ENCODE measurements at regions of chr1 and their contacts with region 1.

Region 1: DNA sequence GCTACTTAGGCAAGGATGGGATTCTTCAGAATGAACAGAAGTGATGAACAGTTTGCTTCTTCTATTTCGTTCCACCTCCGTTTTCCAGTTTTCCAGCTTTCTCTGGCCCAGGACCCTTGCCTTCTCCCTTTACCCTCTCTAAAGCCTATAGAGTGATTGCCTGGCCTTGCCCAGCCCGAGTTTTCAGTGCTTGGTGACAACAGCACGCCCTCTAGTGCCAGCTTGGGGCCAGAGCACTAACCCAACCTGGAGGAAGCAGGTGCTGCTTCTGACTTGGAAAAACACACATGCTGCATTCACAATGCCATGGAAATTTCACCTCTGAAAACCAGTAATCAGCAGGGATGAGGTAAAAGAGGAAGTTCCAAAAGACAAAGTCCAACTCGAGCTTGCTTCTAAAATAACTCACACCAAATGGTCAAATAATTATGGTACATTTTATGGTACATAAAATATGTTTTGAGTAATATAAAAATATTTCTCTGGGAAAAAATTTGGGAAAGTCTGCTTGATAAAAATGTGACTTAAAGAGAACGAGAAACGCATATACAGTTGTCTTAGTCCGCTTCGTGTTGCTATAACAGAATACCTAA is 26.1 kb downstream of the UBE2T start:
- DNase-seq: peak; percentile 51 to 81 (median 65)
- H3K4me3 ChIP-seq: no peak overlapping the region
- H3K27ac ChIP-seq: no peak overlapping the region
- H3K4me1 ChIP-seq: no peaks in the 10 kb centered on the region
- H3K27me3 ChIP-seq: no peaks in the 10 kb centered on the region
- CTCF ChIP-seq: peak; percentile 28 to 63 (median 58)
- EP300 ChIP-seq: no peak
- POLR2A ChIP-seq: no peak

Region 2: DNA sequence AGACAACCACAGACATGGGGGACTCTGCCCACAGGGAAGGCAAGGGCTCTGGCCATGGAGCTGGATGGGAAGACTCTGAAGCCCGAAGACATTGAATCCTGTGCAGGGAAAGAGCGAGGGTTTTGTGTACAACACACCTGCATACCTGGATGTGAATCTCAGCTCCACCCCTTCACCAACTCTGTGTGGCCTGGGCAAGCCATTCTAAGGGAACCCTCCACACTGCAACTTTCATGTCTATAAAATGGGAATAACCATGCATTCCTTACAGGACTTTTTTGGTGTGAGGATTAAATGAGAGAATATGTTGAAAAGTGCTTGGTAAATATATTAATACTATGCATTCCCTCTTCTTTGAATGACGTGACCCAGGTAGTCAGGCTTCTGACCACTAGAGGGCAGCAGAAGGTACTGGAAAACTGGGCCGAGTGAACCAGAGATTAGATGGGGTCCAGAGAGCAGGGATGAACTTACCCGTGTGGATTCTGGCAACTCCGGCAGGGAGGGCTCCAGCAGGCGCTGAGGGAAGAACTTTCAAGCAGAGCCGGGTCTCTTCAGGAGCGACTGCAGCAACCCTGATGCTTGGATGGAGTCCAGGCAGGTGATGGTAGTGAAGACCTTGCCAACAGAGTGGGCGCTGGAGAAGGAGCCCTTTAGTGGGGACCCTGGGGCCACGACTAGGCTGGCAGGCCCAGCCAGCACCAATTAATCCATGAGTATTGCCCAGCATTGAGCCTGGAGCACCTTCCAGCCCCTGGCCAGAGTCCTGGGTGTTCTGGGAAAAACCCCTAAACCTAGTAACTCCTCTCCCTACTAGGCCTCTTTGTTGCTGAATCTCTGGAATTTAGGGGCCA is 306.1 kb before region 1 on chr1:
- intact Hi-C with region 1: loop called in 1 of 4 experiments (anchors 10 kb)
- DNase-seq: peak; percentile 77 to 86 (median 79)
- H3K4me3 ChIP-seq: no peak overlapping the region
- H3K27ac ChIP-seq: peak overlapping the region in 1 of 2 donors; percentile 65
- H3K4me1 ChIP-seq: no peaks in the 10 kb centered on the region
- H3K27me3 ChIP-seq: no peaks in the 10 kb centered on the region
- CTCF ChIP-seq: peak; percentile 81 to 86 (median 84)
- EP300 ChIP-seq: no peak
- POLR2A ChIP-seq: no peak

Region 3: GRCh38 chr1:202154766-202155477 is 160.8 kb before region 1 on chr1:
- intact Hi-C with region 1: no loop called
- DNase-seq: peak in 3 of 5 donors; percentile 56 to 62 (median 56)
- H3K4me3 ChIP-seq: no peak overlapping the region
- H3K27ac ChIP-seq: no peak overlapping the region
- H3K4me1 ChIP-seq: peaks cover 10% of the 10 kb centered on the region
- H3K27me3 ChIP-seq: no peaks in the 10 kb centered on the region
- CTCF ChIP-seq: peak in 1 of 3 donors; percentile 34
- EP300 ChIP-seq: no peak
- POLR2A ChIP-seq: no peak

Region 4: GRCh38 chr1:202193614-202194327 is 121.9 kb before region 1 on chr1 and contains the start of gene LGR6:
- intact Hi-C with region 1: loop called in 3 of 4 experiments (anchors 2 to 10 kb)
- DNase-seq: no peak
- H3K4me3 ChIP-seq: no peak within 1 kb of the TSS
- H3K27ac ChIP-seq: no peak within 1 kb of the TSS
- H3K4me1 ChIP-seq: peaks cover 3% of the 10 kb centered on the region
- H3K27me3 ChIP-seq: no peaks in the 10 kb centered on the region
- CTCF ChIP-seq: no peak
- EP300 ChIP-seq: no peak
- POLR2A ChIP-seq: no peak
- total RNA-seq, gene LGR6: 0.24 to 12.4 (median 1.4) TPM

Region 5: DNA sequence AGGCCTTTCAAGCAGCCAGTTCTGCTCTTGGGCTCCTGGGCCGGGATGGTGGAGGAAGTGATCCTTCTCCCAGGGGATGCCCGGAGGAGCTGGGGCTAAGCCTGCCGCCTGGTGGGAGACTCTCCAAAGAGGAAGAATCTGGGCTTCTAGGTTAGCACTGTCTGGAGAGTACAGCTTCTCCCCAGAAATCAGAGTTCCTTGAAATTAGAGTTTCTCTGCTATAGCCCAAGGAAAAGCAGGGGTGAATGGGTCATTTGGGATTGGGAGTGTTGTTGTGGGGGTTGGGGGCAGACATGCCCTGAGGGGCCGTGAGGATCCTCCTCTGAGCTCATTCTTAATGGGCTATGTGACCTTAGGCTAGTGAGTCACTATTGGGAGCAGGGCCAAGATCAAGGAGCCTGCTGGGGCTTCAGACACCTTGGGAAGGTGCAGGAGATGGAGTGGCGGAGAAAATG is 115.5 kb before region 1 on chr1:
- intact Hi-C with region 1: loop called in 2 of 4 experiments (anchors 2 to 5 kb)
- DNase-seq: no peak
- H3K4me3 ChIP-seq: no peak overlapping the region
- H3K27ac ChIP-seq: no peak overlapping the region
- H3K4me1 ChIP-seq: no peaks in the 10 kb centered on the region
- H3K27me3 ChIP-seq: no peaks in the 10 kb centered on the region
- CTCF ChIP-seq: no peak
- EP300 ChIP-seq: no peak
- POLR2A ChIP-seq: no peak

Region 6: GRCh38 chr1:202247894-202248681 is 67.6 kb before region 1 on chr1:
- intact Hi-C with region 1: no loop called
- DNase-seq: peak in 1 of 5 donors; percentile 3
- H3K4me3 ChIP-seq: no peak overlapping the region
- H3K27ac ChIP-seq: no peak overlapping the region
- H3K4me1 ChIP-seq: no peaks in the 10 kb centered on the region
- H3K27me3 ChIP-seq: no peaks in the 10 kb centered on the region
- CTCF ChIP-seq: no peak
- EP300 ChIP-seq: no peak
- POLR2A ChIP-seq: no peak

Region 7: DNA sequence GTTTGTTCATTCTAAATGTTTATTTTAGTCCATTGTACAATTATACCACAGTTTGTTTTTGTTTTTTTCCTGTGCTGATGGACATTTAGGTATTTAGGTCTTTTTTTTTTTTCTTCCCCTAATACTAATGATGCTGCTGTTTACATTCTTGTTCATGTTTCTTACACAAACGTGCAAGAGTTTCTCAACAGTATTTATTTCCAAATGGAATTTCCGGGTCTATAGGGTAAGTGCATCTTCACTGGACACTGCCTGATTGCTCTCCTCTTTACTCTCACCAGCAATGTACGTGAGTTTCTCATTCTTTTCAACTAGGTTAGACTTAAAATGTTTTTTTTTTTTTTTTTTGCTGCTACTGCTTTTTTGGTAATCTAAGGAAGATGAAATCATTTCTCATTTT is 155.6 kb after region 1 on chr1:
- intact Hi-C with region 1: no loop called
- DNase-seq: no peak
- H3K4me3 ChIP-seq: no peak overlapping the region
- H3K27ac ChIP-seq: no peak overlapping the region
- H3K4me1 ChIP-seq: no peaks in the 10 kb centered on the region
- H3K27me3 ChIP-seq: no peaks in the 10 kb centered on the region
- CTCF ChIP-seq: no peak
- EP300 ChIP-seq: no peak
- POLR2A ChIP-seq: no peak

Region 8: GRCh38 chr1:202625416-202626360 is 310.0 kb after region 1 on chr1:
- intact Hi-C with region 1: no loop called
- DNase-seq: peak; percentile 69 to 86 (median 76)
- H3K4me3 ChIP-seq: no peak overlapping the region
- H3K27ac ChIP-seq: no peak overlapping the region
- H3K4me1 ChIP-seq: peaks cover 9% of the 10 kb centered on the region
- H3K27me3 ChIP-seq: no peaks in the 10 kb centered on the region
- CTCF ChIP-seq: peak; percentile 53 to 59 (median 53)
- EP300 ChIP-seq: no peak
- POLR2A ChIP-seq: no peak